ENCODE measurements at regions of chr11 and their contacts with region 1.

Region 1: DNA sequence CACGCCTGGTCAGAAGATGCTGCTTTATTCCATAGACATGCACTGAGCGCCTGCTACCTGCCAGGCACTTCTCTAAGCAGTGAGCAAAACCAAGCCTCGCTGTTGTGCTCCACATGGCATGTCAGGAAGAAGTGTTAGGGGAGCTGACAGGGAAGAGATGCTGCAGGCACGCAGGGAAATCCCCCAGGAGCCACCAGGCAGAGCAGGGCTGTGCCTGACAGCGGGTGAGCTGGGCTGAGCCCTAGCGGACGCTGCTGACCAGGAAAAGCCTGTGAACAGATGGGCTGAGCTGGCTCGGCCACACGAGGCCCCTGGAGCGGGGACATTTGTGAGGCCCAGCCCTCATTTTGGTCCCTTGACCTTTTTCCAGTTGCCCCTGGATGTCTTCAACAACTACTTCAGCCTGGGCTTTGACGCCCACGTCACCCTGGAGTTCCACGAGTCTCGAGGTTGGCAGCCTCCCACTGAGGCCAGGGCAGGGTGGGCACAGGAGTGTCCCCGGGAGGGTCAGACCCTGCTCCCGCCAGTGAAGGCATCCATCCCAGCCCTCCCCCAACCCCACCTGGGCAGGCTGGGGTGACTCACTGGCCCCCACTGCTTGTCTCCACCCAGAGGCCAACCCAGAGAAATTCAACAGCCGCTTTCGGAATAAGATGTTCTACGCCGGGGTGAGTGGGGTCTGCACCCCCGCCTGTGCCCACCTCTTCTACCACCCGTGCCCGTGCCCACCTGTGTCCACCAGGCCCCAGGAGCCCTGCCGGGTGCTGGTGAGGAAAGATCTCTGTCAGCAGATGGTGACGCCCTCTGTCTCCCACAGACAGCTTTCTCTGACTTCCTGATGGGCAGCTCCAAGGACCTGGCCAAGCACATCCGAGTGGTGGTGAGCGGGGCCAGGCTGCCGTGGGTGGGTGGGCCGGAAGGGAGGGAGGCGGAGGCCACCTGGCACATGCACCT is 7.4 kb upstream of the MDK start:
- DNase-seq: no peak
- ATAC-seq: no peak
- H3K4me3 Mint-ChIP-seq: no peak overlapping the region
- H3K27ac Mint-ChIP-seq: no peak overlapping the region
- H3K4me1 Mint-ChIP-seq: no peaks in the 10 kb centered on the region
- H3K27me3 Mint-ChIP-seq: no peaks in the 10 kb centered on the region
- CTCF ChIP-seq: no peak

Region 2: GRCh38 chr11:46322759-46323158 is 51.3 kb before region 1 on chr11:
- CTCF ChIA-PET with region 1: no interaction called
- POLR2A ChIA-PET with region 1: no interaction called
- intact Hi-C with region 1: no loop called
- DNase-seq: no peak
- ATAC-seq: no peak
- H3K4me3 Mint-ChIP-seq: no peak overlapping the region
- H3K27ac Mint-ChIP-seq: no peak overlapping the region
- H3K4me1 Mint-ChIP-seq: peaks cover 14% of the 10 kb centered on the region
- H3K27me3 Mint-ChIP-seq: peaks cover 21% of the 10 kb centered on the region
- CTCF ChIP-seq: no peak

Region 3: DNA sequence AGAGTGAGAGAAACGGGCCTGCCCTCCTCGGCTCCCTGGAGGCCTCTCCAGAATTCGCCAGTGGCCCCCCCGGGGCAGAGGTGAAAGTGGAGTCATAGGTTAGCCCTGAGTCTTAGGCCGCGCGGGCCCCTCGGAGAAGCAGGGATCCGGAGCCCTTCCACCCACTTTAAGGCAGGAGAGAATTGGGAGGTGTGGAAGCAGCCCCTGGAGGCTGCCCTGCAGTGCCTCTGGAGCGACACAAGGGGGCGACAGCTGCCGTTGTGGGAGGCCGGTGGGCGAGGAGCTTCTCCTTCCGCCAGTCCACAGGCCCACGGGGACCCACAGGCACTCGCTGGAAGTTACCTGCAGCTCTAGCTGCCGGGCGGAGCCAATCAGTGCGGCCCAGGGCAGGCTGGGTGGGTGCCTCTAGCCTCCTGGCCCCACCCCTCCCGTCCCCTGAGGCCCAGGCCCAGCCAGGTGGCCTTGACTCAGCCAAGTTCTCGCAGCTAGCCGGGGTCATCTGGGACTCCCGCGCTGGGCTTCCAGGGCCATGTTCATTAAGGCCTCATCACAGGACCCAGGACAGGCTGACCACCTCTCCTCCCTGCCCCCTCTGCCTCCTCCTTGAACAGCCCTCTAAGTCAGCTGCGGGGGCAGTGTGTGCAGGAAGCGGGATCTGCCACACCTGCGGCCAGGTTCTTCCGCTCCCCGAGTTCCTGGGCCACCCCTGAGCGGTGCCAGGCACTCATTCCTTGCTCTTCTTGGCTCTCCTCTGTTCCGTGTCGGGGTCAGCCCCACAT is 21.8 kb before region 1 on chr11:
- CTCF ChIA-PET with region 1: interaction called, 8 read pairs
- POLR2A ChIA-PET with region 1: interaction called, 10 read pairs
- intact Hi-C with region 1: no loop called
- DNase-seq: no peak
- ATAC-seq: no peak
- H3K4me3 Mint-ChIP-seq: no peak overlapping the region
- H3K27ac Mint-ChIP-seq: no peak overlapping the region
- H3K4me1 Mint-ChIP-seq: peaks cover 36% of the 10 kb centered on the region
- H3K27me3 Mint-ChIP-seq: no peaks in the 10 kb centered on the region
- CTCF ChIP-seq: no peak

Region 4: DNA sequence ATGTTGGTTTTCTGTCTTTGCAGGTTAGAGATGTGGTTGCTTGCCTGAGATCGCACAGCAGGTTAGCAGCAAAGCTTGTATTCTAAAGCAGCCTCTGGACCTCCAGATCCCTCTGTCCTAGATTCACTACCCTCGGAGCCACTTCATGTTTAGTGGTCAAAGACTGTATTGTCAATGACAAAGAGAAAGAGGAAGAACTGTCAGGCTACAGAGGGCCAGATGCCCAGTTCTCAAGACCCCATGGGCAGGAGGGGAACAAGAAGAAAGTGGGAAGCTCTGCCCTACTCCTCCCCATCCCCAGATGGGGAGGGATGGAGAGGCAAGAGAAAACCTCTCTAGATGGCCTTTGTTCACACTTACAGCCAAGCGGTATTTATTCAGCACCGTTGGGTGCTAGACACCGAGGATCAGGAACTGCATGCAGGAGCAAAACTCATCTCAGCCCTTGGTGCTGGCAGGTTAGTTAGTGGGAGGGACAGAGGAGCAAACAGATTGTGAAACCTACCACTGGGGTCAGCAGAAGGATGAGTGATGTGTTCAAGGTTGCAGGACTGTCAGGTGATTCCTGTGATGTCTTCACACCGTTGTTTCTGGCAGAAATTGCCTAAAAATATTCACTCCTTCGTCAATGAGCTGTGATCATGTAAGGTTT is 1568.0 kb after region 1 on chr11:
- CTCF ChIA-PET with region 1: no interaction called
- POLR2A ChIA-PET with region 1: no interaction called
- intact Hi-C with region 1: no loop called
- DNase-seq: no peak
- ATAC-seq: no peak
- H3K4me3 Mint-ChIP-seq: no peak overlapping the region
- H3K27ac Mint-ChIP-seq: no peak overlapping the region
- H3K4me1 Mint-ChIP-seq: peaks cover 23% of the 10 kb centered on the region
- H3K27me3 Mint-ChIP-seq: no peaks in the 10 kb centered on the region
- CTCF ChIP-seq: no peak